ENCODE measurements at regions of chr9 and their contacts with region 1.

Region 1: DNA sequence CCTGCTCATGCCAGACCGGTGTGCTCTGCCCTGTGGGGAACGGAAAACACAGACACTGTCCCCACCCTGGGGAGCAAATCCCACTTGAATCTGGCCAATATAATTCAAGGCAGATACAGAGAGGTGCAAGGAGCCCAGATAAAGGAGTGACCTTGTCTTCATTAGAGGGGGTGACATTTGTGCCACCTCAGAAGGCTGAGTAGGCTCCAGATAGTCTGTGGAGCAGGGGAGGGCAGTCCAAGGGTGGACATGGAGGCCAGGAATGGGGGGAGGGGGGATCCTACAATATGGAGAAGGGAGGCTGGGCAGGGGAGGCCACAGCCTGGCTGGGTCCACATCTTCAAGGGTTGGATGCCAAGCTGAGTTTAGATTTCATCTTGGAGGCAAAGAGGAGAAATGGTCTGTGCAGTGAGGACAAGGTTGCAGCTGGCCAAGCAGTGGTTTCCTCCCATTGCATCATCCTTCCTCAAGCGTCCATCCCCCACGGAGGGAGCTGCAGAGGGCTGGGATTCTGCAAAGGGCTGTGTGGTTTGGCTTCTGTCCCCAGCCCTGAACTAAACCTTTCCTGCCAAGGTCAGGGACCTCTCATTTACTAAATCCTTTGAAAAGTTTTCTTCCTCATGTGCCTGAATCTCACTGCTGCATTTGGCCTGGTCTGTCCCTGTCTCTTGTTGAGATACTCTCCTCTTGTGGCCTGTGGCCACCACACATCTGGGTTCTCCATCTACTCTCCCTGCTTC is 60.1 kb downstream of the GALNT12 start:
- DNase-seq: peak; percentile 73 to 88
- ATAC-seq: peak; percentile 81 to 93 (median 89)
- H3K4me3 ChIP-seq: no peak overlapping the region
- H3K27ac ChIP-seq: peak overlapping the region; percentile 75 to 90 (median 82)
- H3K4me1 ChIP-seq: peaks cover 6 to 82% (median 63%) of the 10 kb centered on the region in 9 donors
- H3K27me3 ChIP-seq: no peaks in the 10 kb centered on the region
- CTCF ChIP-seq: no peak

Region 2: DNA sequence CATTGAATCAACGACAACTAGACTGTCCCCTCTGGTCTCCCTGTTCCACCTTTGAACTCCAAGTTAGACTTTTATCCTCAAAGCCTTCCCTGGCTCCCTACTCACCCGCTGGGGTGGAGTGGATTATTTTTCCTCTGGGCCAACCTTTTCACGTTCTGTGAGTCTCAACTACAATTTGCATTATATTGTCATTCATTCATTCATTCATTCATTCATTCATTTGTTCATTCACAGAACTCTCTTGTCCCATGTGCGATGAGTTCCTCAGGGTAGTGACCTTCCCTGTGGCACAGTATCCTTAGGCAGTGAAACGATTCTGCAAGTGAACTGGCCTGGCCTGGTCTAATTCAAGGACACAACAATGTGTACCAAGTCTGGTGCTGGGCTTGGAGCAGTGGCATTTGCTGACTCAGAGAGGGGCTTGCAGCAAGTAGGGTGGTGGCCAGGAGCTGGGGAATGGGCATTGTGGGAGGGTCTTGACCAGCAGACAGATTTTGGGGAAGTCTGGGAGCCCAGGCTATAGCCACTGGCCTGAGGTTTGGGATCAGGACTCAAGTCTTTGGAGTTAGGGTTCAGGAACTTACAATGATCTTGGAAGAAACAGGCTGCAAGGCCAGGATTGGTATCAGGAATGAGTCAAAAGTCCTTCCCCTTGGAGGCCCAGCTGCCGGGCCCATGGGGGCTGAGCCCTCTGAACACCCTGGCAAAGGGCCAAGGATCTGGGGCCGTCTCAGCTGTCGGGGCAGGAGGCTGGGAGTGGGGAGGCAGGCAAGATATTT is 38.9 kb after region 1 on chr9:
- intact Hi-C with region 1: loop called in 4 of 10 experiments (anchors 5 to 10 kb)
- DNase-seq: peak; percentile 55 to 73
- ATAC-seq: peak in 2 of 8 donors; percentile 47 to 62
- H3K4me3 ChIP-seq: no peak overlapping the region
- H3K27ac ChIP-seq: peak overlapping the region in 9 of 10 donors; percentile 12 to 86 (median 75)
- H3K4me1 ChIP-seq: peaks cover 16 to 71% (median 50%) of the 10 kb centered on the region in 9 donors
- H3K27me3 ChIP-seq: no peaks in the 10 kb centered on the region
- CTCF ChIP-seq: no peak